ENCODE measurements at regions of chr2 and their contacts with region 1.

Region 1: GRCh38 chr2:156908825-156909224 is 348.7 kb upstream of the GALNT5 start:
- DNase-seq: no peak
- H3K4me3 Mint-ChIP-seq: no peak overlapping the region
- H3K27ac Mint-ChIP-seq: no peak overlapping the region
- H3K4me1 Mint-ChIP-seq: peaks cover 17% of the 10 kb centered on the region
- H3K27me3 Mint-ChIP-seq: no peaks in the 10 kb centered on the region
- CTCF ChIP-seq: no peak

Region 2: DNA sequence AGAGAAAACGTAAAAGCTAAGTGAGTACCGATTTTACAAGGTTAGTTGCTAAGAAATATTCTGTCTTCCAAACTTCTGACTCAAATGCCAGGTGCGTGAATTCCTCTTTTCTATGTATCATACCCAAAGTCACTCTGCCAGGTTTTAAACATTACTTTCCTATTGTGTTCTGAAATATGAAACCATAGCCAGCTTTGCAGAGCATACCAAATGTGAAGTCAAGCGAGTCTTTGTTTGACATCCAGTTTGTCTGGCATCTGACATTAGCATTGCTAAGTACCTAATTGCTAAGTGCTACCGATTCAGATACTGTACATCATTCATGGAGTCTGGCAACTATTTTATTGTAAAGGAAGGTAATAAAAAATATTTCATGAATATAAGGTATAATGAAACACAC is 26.8 kb after region 1 on chr2:
- CTCF ChIA-PET with region 1: no interaction called
- intact Hi-C with region 1: no loop called
- DNase-seq: peak; percentile 28
- H3K4me3 Mint-ChIP-seq: no peak overlapping the region
- H3K27ac Mint-ChIP-seq: no peak overlapping the region
- H3K4me1 Mint-ChIP-seq: peaks cover 18% of the 10 kb centered on the region
- H3K27me3 Mint-ChIP-seq: no peaks in the 10 kb centered on the region
- CTCF ChIP-seq: no peak

Region 3: GRCh38 chr2:157032017-157032416 is 123.2 kb after region 1 on chr2:
- CTCF ChIA-PET with region 1: no interaction called
- intact Hi-C with region 1: loop called (anchors 5 kb)
- DNase-seq: peak; percentile 18
- H3K4me3 Mint-ChIP-seq: no peak overlapping the region
- H3K27ac Mint-ChIP-seq: peak overlapping the region; percentile 78
- H3K4me1 Mint-ChIP-seq: peaks cover 20% of the 10 kb centered on the region
- H3K27me3 Mint-ChIP-seq: no peaks in the 10 kb centered on the region
- CTCF ChIP-seq: no peak